A549 (cell line): ENCODE measurements at regions of chr17 and their contacts with region 1.

Region 1: GRCh38 chr17:80859324-80860150 is 132.1 kb upstream of the CHMP6 start:
- DNase-seq: peak in 1 of 2 experiments; percentile 37
- ATAC-seq: peak; percentile 19 to 22; a peak in 3 of 6 replicates
- H3K4me3 ChIP-seq: no peak overlapping the region
- H3K27ac ChIP-seq: peak overlapping the region; percentile 7 to 86; a peak in 4 of 6 replicates
- H3K4me1 ChIP-seq: peaks cover 38% of the 10 kb centered on the region
- CTCF ChIP-seq: 0 out of 3 replicates have a peak, but pooled peaks have one; percentile 9
- EP300 ChIP-seq: no peak
- POLR2A ChIP-seq: no peak
- RAD21 ChIP-seq: peak; percentile 11 to 20; a peak in 1 of 5 replicates

Region 2: DNA sequence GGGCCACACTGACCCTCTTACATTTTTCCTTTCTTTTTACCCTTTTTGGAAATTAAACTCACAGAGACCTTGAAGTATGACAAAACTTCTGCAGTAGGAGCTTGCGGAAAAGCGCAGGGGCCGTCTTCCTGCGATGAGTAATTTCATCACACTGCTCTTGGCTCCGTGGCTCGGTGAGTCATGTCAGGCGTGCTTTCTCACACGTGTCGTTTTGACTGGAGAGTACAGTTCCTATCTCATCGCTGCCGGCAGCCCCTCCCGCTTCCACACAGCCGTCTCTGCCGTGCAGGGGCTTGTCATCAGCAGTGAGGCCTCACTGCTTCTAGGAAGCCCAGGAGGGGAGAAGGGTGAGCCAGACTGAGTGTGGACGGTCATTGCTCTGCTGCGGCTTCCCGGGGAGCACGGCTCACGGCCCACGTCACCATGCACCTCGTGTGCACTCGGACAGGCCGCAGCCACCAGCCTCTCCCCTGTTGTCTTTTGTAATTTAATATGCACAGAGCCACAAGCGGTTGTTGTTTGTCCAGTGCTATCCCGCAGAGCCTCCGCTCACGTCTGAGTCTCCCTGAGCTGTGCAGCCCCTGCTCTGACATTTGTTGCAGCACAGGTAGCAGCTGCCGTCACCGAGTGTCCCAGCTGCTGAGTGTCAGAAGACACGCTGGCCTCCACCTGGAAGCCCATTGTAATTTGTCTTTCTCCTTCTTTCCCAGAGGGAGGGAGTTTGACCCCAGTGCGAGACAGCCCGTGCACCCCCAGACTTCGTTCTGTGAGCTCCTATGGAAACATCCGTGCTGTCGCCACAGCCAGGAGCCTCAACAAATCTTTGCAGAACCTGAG is 32.7 kb after region 1 on chr17:
- CTCF ChIA-PET with region 1: interaction called, 11 read pairs
- POLR2A ChIA-PET with region 1: no interaction called
- DNase-seq: peak; percentile 86 to 97
- ATAC-seq: peak; percentile 83 to 85
- H3K4me3 ChIP-seq: no peak overlapping the region
- H3K27ac ChIP-seq: peak overlapping the region; percentile 57 to 84
- H3K4me1 ChIP-seq: peaks cover 30% of the 10 kb centered on the region
- CTCF ChIP-seq: no peak
- EP300 ChIP-seq: no peak
- POLR2A ChIP-seq: no peak
- RAD21 ChIP-seq: no peak

Region 3: GRCh38 chr17:80899402-80900268 is 40.1 kb after region 1 on chr17:
- CTCF ChIA-PET with region 1: interaction called, 11 read pairs
- POLR2A ChIA-PET with region 1: no interaction called
- DNase-seq: peak; percentile 60 to 70
- ATAC-seq: peak; percentile 69 to 80; a peak in 4 of 6 replicates
- H3K4me3 ChIP-seq: no peak overlapping the region
- H3K27ac ChIP-seq: no peak overlapping the region
- H3K4me1 ChIP-seq: no peaks in the 10 kb centered on the region
- CTCF ChIP-seq: peak; percentile 68
- EP300 ChIP-seq: no peak
- POLR2A ChIP-seq: no peak
- RAD21 ChIP-seq: peak; percentile 69 to 85